Uterus (tissue), 4 donors: ENCODE measurements at regions of chr1 and their contacts with region 1.

Region 1: GRCh38 chr1:114757455-114758250 is at the start of gene CSDE1:
- DNase-seq: peak; percentile 98
- H3K4me3 ChIP-seq: peak within 1 kb of the TSS; percentile 96 to 97
- H3K27ac ChIP-seq: peak within 1 kb of the TSS; percentile 99
- H3K4me1 ChIP-seq: peaks cover 9 to 14% of the 10 kb centered on the region in 2 donors
- H3K27me3 ChIP-seq: no peaks in the 10 kb centered on the region
- CTCF ChIP-seq: peak in 3 of 4 experiments; percentile 4 to 44 (median 23)
- POLR2A ChIP-seq: peak; percentile 78 to 89
- total RNA-seq, gene CSDE1: 247 to 1,200 (median 856) TPM

Region 2: GRCh38 chr1:114511032-114511785 is 246.4 kb before region 1 on chr1 and contains the start of gene TRIM33:
- intact Hi-C with region 1: loop called (anchors 5 kb)
- DNase-seq: peak; percentile 83 to 91
- H3K4me3 ChIP-seq: peak within 1 kb of the TSS; percentile 77 to 83
- H3K27ac ChIP-seq: peak within 1 kb of the TSS; percentile 90 to 92
- H3K4me1 ChIP-seq: peaks cover 4 to 10% of the 10 kb centered on the region in 2 donors
- H3K27me3 ChIP-seq: no peaks in the 10 kb centered on the region
- CTCF ChIP-seq: peak in 2 of 4 experiments; percentile 28 to 30
- POLR2A ChIP-seq: peak; percentile 69 to 82
- total RNA-seq, gene TRIM33: 23.6 to 73.7 (median 50.8) TPM

Region 3: DNA sequence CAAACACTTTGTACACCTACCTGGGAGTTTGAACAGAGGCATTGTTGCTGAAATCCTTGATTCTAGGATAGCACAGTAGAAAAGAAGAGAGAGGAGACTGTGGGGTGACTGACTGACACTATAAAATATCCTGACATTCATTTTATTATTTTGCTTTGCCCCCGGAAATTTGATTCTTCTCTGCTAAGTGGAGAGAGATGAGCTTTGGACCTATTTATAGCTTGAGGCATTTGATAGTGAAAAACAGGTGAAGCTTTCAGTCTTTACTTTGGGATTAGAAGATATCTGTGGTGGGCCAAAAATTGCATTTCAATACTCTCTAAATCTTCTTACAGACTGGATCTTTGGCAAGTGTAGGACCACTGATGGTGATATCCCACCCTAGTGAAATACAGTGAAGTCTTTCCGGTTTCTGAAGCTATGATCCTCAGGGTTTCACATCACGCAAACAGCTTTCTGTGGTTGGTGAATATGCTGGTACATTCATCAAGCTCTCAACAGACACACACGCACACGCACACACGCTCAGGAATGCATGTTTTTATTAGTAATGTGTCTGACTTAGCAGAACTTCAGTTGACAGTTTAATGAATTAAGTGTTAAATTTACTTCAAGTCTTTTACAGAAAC is 62.1 kb before region 1 on chr1 and contains the start of gene AMPD1:
- intact Hi-C with region 1: no loop called
- DNase-seq: no peak
- H3K4me3 ChIP-seq: no peak within 1 kb of the TSS
- H3K27ac ChIP-seq: no peak within 1 kb of the TSS
- H3K4me1 ChIP-seq: no peaks in the 10 kb centered on the region
- H3K27me3 ChIP-seq: no peaks in the 10 kb centered on the region
- CTCF ChIP-seq: no peak
- POLR2A ChIP-seq: no peak
- total RNA-seq, gene AMPD1: 1.3 TPM in 1 of 4 donors, not detected in the others